GM10248 (cell line): ENCODE measurements at regions of chr6 and their contacts with region 1.

Region 1: DNA sequence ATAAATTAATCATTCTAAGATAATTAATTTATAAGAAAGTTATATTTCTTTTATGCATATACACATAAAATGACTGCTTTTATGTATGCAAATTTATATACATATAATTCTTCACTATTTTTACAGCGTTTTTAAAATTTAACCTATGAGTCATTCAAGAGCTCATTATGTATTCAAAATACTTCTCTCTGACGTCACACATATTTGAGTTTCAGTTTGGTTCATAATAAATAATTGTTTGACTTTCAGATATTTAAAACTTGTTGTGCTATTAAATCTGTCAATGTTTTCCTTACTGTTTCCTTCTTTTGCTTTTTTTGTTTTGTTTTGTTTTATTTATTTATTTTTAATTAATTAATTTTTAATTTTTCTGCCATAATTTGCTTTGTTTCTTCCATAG is 467.5 kb upstream of the ADGRB3 start:
- DNase-seq: no peak
- CTCF ChIP-seq: no peak

Region 2: DNA sequence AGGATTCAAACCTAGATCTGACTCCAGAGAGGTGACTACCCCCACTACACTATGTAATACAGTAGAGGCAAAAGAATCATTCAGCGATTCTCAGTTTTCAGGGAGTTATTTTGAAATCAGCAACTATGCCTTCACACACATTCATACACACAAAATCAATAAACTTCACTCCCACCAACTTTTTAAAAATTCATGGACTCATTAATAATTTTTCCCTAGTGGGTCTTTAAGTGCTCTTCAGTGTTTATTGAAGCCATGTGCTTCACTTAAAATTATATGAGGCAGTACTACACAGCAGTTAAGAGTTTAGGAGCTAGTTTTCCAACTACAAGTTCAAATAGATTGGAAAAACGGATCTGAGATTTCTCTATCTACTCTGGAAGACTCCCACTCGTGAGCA is 14.8 kb after region 1 on chr6:
- CTCF ChIA-PET with region 1: interaction called, 11 read pairs
- POLR2A ChIA-PET with region 1: no interaction called
- DNase-seq: no peak
- CTCF ChIP-seq: no peak

Region 3: GRCh38 chr6:68226460-68226859 is 58.9 kb after region 1 on chr6:
- CTCF ChIA-PET with region 1: no interaction called
- POLR2A ChIA-PET with region 1: no interaction called
- DNase-seq: no peak
- CTCF ChIP-seq: peak; percentile 48